ENCODE measurements at regions of chr5 and their contacts with region 1.

Region 1: DNA sequence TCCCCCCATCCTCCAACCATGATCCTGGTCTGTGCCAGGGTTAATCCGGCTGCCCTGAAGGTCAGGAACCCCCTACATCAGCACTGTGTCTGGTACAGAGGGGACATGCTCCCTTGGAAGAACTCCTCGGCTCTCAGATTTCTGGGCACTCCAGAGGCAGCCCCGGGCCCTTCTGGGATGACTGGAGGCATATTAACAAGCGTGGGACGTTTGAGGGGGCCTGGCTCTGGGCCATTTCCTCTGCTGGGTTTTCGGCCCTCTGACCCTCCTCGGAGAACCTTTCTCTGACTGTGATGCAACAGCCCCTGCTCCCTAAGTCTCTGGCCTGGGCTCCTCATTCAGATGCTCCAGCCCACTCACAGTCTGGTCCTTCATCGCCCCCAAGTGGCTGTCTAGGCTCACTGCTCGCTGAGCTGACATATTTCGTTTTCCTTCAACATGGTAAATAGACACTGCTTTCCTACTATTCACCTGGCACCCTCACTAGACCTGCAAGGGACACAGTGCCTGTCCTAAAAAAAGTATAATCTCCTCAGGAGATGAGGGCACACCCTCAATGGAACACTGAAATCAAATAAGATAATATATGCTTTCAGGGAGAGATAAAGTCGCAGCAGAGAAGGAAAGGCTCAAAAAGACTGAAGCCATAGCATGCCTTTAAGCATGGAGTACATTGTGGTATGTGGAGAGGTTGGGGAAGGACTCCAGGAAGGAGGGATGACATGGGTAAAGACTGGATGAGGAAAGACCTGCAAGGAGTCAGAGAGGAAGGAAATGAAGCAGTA is 404.7 kb upstream of the TRPC7 start:
- DNase-seq: peak; percentile 21
- H3K4me3 ChIP-seq: no peak overlapping the region
- H3K27ac ChIP-seq: no peak overlapping the region
- H3K27me3 ChIP-seq: no peaks in the 10 kb centered on the region
- CTCF ChIP-seq: peak; percentile 79

Region 2: DNA sequence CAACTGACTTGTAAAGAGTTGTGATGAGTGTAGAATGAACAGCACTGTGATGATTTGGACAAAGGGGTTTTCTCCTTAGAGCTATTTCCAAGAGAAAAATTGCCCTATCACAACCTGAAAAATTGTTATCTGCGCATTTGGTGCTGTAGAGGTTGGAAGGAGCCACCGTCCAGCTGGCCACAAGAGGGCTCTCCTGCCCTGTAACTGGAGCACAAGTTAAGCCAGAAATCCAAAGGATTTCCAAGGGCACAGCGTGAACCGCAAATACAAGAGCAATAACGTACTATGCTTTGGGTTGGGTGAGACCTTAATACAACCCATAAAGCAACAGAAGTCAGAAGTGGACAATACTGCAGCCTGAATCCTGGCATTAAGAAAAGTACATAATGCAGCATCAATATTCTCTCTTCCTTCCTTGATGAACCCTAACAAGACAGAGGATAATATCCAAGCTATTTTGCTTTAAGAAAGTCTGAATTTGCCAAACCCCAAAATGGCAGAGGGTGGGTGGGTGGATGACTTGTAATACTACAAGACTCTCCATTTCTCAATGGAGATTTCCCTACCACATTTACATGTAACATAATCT is 520.3 kb before region 1 on chr5:
- CTCF ChIA-PET with region 1: interaction called, 32 read pairs
- POLR2A ChIA-PET with region 1: no interaction called
- DNase-seq: peak; percentile 48
- H3K4me3 ChIP-seq: no peak overlapping the region
- H3K27ac ChIP-seq: no peak overlapping the region
- H3K27me3 ChIP-seq: peaks cover 6% of the 10 kb centered on the region
- CTCF ChIP-seq: peak; percentile 98

Region 3: GRCh38 chr5:137684761-137685160 is 914.7 kb after region 1 on chr5:
- CTCF ChIA-PET with region 1: no interaction called
- POLR2A ChIA-PET with region 1: no interaction called
- DNase-seq: no peak
- H3K4me3 ChIP-seq: no peak overlapping the region
- H3K27ac ChIP-seq: no peak overlapping the region
- H3K27me3 ChIP-seq: no peaks in the 10 kb centered on the region
- CTCF ChIP-seq: no peak

Measured in AG04450 (cell line).